Heart right ventricle (tissue), 16 donors: ENCODE measurements at regions of chr18 and their contacts with region 1.

Region 1: GRCh38 chr18:50374753-50375391 is at the start of gene SKA1:
- DNase-seq: peak; percentile 91 to 94
- ATAC-seq: peak; percentile 100
- H3K4me3 ChIP-seq: peak within 1 kb of the TSS; percentile 27 to 70 (median 57)
- H3K27ac ChIP-seq: peak within 1 kb of the TSS in 9 of 10 donors; percentile 71 to 88 (median 83)
- H3K4me1 ChIP-seq: peaks cover 0 to 14% (median 8%) of the 10 kb centered on the region in 9 donors
- H3K27me3 ChIP-seq: no peaks in the 10 kb centered on the region
- CTCF ChIP-seq: no peak
- total RNA-seq, gene SKA1: 0.13 to 1.9 (median 0.33) TPM

Region 2: DNA sequence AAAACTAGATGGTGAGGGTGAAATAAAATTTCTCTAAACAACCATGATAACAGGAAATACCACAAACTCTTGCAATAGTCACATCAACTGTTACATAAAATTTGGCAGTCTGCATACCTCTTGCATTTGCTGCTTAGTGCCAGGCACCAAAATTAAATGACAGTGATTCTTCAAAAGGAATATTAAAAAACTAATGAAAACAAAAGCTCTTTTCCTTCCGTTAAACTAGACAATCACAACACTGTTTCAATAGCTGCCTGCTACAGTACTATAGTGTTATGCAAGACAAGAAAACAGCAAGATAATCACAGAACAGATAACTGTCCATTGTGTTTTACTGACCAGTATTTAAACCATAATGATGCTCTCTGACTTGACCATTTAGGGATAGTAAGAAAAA is 1185.1 kb before region 1 on chr18:
- intact Hi-C with region 1: loop called in 1 of 10 experiments (anchors 5 kb)
- DNase-seq: no peak
- ATAC-seq: no peak
- H3K4me3 ChIP-seq: no peak overlapping the region
- H3K27ac ChIP-seq: no peak overlapping the region
- H3K4me1 ChIP-seq: peaks cover 0 to 24% (median 11%) of the 10 kb centered on the region in 9 donors
- H3K27me3 ChIP-seq: no peaks in the 10 kb centered on the region
- CTCF ChIP-seq: no peak

Region 3: GRCh38 chr18:50266248-50266704 is 108.6 kb before region 1 on chr18 and contains the start of gene CFAP53:
- intact Hi-C with region 1: loop called in 2 of 10 experiments (anchors 10 kb)
- DNase-seq: peak; percentile 94 to 95
- ATAC-seq: peak; percentile 97 to 99 (median 98)
- H3K4me3 ChIP-seq: peak within 1 kb of the TSS; percentile 27 to 74 (median 70)
- H3K27ac ChIP-seq: peak within 1 kb of the TSS in 7 of 10 donors; percentile 31 to 69 (median 40)
- H3K4me1 ChIP-seq: peaks cover 0 to 36% (median 15%) of the 10 kb centered on the region in 9 donors
- H3K27me3 ChIP-seq: no peaks in the 10 kb centered on the region
- CTCF ChIP-seq: no peak
- total RNA-seq, gene CFAP53: 0.15 to 0.25 (median 0.18) TPM in 6 of 10 donors, not detected in the others

Region 4: GRCh38 chr18:50287441-50288347 is 87.2 kb before region 1 on chr18 and contains the start of gene CXXC1:
- intact Hi-C with region 1: loop called in 4 of 10 experiments (anchors 5 to 10 kb)
- DNase-seq: peak; percentile 97
- ATAC-seq: peak; percentile 94 to 97 (median 96)
- H3K4me3 ChIP-seq: peak within 1 kb of the TSS; percentile 60 to 94 (median 70)
- H3K27ac ChIP-seq: peak within 1 kb of the TSS; percentile 61 to 91 (median 86)
- H3K4me1 ChIP-seq: peaks cover 0 to 22% (median 11%) of the 10 kb centered on the region in 9 donors
- H3K27me3 ChIP-seq: peaks cover 0 to 2% (median 0%) of the 10 kb centered on the region in 7 donors
- CTCF ChIP-seq: peak; percentile 17 to 68 (median 49)
- total RNA-seq, gene CXXC1: 22.1 to 49.6 (median 26.3) TPM

Region 5: DNA sequence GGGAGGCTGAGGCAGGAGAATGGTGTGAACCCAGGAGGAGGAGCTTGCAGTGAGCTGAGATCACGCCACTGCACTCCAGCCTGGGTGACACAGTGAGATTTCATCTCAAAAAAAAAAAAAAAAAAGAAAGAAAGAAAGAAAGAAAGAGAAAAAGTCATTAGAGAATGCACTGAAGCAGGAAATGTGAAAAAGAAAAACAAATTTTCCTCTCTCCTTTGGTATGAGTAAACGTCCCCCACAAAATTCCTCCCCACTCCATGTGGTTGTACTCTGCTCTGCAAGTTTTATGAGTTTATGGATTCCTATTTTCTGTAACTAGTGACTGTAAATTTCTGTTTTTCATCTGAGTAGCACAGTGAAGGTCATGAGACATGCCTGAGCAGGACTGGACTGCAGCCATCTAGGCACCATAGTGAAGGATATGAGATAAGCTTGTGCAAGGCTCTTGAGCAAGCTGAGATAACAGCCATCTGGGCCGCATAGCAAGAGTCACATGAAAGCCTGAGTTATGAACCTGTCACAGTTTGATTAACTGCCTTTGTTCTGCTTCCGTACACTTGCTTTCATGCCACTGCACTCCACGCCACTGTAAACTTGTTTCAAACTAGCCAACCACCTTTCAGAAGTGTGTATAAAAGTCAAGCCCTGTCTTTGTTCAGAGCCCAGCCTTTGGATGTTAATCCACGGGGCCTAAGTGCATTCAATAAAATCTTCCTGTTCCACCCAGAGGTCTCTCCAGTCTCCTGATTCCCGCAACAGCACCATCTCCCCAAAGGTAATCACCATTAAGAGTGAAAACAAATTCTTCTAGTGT is 50.2 kb after region 1 on chr18:
- intact Hi-C with region 1: no loop called
- DNase-seq: peak; percentile 30 to 69
- ATAC-seq: peak; percentile 72 to 96 (median 94)
- H3K4me3 ChIP-seq: no peak overlapping the region
- H3K27ac ChIP-seq: peak overlapping the region; percentile 23 to 82 (median 60)
- H3K4me1 ChIP-seq: peaks cover 0 to 17% (median 2%) of the 10 kb centered on the region in 9 donors
- H3K27me3 ChIP-seq: no peaks in the 10 kb centered on the region
- CTCF ChIP-seq: no peak